ENCODE measurements at regions of chr2 and their contacts with region 1.

Region 1: DNA sequence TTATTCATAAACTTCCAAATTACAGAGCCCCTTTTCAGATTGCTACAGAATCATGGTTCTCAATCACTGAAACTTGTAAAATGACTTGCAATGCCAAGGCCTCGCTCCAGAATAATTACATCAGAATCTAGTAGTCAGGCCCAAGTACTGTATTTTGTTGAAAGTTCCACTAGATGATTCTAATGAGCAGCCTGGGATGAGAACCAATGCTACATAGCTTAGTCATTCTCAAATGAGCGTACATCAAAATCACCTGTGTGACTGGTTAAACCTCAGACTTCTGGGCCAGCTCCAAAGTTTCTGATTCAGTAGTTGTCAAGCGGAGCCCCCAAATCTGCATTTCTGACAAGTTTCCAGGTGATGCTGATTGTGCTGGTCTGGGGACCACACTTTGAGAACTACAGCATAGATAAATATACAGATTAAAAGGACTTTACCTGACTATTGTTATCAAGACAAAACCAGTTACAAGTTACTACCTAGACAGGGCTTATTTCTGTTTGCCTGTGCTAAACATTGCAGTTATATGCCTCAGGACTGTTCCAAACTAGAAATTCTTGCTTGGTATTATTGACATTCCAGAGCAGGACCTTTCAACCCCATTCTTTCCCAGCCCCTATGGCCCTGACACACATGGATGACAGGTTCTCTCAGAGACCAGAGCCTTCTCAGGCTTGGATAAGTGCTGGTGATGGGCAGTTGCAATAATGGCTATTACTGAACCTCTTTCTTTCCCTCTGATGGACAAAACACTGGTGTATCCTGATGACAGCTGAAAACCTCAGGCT is 83.1 kb downstream of the UPP2 start:
- DNase-seq: peak; percentile 97
- ATAC-seq: peak; percentile 98
- H3K4me3 ChIP-seq: no peak overlapping the region; a peak in 1 of 6 replicates
- H3K27ac ChIP-seq: peak overlapping the region; percentile 28
- H3K4me1 ChIP-seq: peaks cover 97% of the 10 kb centered on the region
- H3K27me3 ChIP-seq: no peaks in the 10 kb centered on the region
- CTCF ChIP-seq: no peak
- EP300 ChIP-seq: peak in 1 of 2 experiments; percentile 89; a peak in 2 of 4 replicates
- POLR2A ChIP-seq: no peak
- RAD21 ChIP-seq: no peak

Region 2: GRCh38 chr2:158207354-158207753 is 22.6 kb after region 1 on chr2:
- CTCF ChIA-PET with region 1: no interaction called
- POLR2A ChIA-PET with region 1: no interaction called
- in situ Hi-C with region 1: no loop called
- intact Hi-C with region 1: loop called (anchors 2 kb)
- DNase-seq: peak; percentile 80
- ATAC-seq: peak; percentile 65; the same call in 2 of the 3 replicates
- H3K4me3 ChIP-seq: no peak overlapping the region
- H3K27ac ChIP-seq: no peak overlapping the region
- H3K4me1 ChIP-seq: peaks cover 40% of the 10 kb centered on the region
- H3K27me3 ChIP-seq: no peaks in the 10 kb centered on the region; a peak in 1 of 5 replicates
- CTCF ChIP-seq: no peak
- EP300 ChIP-seq: peak in 1 of 2 experiments; percentile 50; a peak in 2 of 4 replicates
- POLR2A ChIP-seq: no peak
- RAD21 ChIP-seq: no peak

Region 3: DNA sequence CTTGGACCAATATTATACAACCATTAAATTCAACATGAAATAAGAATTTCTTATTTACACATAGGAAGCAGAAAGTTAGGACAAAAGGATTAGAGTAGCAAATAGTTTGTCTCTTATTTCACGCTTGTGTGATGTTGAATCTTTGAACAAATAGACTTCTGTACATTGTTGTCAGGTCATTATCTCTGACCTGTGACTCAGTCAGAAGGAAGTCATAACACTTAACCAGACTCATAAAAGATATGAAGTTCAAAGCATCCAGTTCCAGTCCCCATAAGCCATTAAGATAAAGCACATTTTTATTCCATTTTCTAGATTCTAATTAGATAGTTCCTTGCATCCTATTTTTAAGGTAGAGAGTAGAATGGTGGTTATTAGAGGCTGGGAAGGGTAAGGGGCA is 47.7 kb after region 1 on chr2:
- CTCF ChIA-PET with region 1: no interaction called
- POLR2A ChIA-PET with region 1: no interaction called
- in situ Hi-C with region 1: no loop called
- intact Hi-C with region 1: loop called (anchors 1 kb)
- DNase-seq: peak; percentile 88
- ATAC-seq: peak; percentile 88
- H3K4me3 ChIP-seq: no peak overlapping the region
- H3K27ac ChIP-seq: no peak overlapping the region
- H3K4me1 ChIP-seq: peaks cover 19% of the 10 kb centered on the region
- H3K27me3 ChIP-seq: peaks cover 1 to 23% of the 10 kb centered on the region in 2 experiments; a peak in 4 of 5 replicates
- CTCF ChIP-seq: no peak
- EP300 ChIP-seq: peak in 1 of 2 experiments; percentile 91; a peak in 2 of 4 replicates
- POLR2A ChIP-seq: no peak
- RAD21 ChIP-seq: no peak

Region 4: DNA sequence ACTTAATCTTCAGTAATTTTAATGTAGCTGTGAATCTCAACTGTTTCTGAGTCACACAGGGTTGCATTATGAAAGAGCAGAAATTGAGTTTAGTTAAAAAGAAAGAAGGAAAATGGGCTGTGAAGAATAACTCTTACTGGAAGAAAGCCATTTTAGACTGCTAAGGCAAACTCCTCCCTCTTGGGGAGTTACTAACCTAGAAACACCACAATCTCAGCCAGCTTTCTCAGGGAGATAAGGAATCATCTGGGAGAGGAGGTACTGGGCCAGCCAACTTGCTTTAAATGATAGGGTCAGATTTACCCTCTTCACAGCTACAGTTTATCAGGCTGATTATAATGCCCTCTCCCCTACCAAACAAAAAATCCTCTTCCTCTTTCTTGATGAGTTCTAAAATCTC is 152.3 kb after region 1 on chr2:
- CTCF ChIA-PET with region 1: no interaction called
- POLR2A ChIA-PET with region 1: no interaction called
- in situ Hi-C with region 1: no loop called
- intact Hi-C with region 1: no loop called
- DNase-seq: no peak
- ATAC-seq: no peak
- H3K4me3 ChIP-seq: no peak overlapping the region
- H3K27ac ChIP-seq: no peak overlapping the region
- H3K4me1 ChIP-seq: no peaks in the 10 kb centered on the region
- H3K27me3 ChIP-seq: 0 out of 5 replicates have a peak, but pooled peaks cover 0 to 2% of the 10 kb centered on the region in 2 experiments
- CTCF ChIP-seq: no peak
- EP300 ChIP-seq: no peak
- POLR2A ChIP-seq: no peak
- RAD21 ChIP-seq: no peak

Measured in HepG2 (cell line).